MCF 10A (cell line): ENCODE measurements at regions of chr12 and their contacts with region 1.

Region 1: GRCh38 chr12:569803-570434 is 93.3 kb downstream of the NINJ2 start:
- DNase-seq: peak; percentile 86
- H3K4me3 Mint-ChIP-seq: peak overlapping the region; percentile 85
- H3K27ac Mint-ChIP-seq: peak overlapping the region; percentile 90
- H3K4me1 Mint-ChIP-seq: peaks cover 23% of the 10 kb centered on the region
- H3K27me3 Mint-ChIP-seq: no peaks in the 10 kb centered on the region
- CTCF ChIP-seq: peak; percentile 90

Region 2: GRCh38 chr12:630656-631632 is 61.0 kb after region 1 on chr12:
- CTCF ChIA-PET with region 1: interaction called, 11 read pairs
- POLR2A ChIA-PET with region 1: interaction called, 16 read pairs
- intact Hi-C with region 1: no loop called
- DNase-seq: no peak
- H3K4me3 Mint-ChIP-seq: no peak overlapping the region
- H3K27ac Mint-ChIP-seq: peak overlapping the region; percentile 89
- H3K4me1 Mint-ChIP-seq: peaks cover 15% of the 10 kb centered on the region
- H3K27me3 Mint-ChIP-seq: no peaks in the 10 kb centered on the region
- CTCF ChIP-seq: no peak

Region 3: DNA sequence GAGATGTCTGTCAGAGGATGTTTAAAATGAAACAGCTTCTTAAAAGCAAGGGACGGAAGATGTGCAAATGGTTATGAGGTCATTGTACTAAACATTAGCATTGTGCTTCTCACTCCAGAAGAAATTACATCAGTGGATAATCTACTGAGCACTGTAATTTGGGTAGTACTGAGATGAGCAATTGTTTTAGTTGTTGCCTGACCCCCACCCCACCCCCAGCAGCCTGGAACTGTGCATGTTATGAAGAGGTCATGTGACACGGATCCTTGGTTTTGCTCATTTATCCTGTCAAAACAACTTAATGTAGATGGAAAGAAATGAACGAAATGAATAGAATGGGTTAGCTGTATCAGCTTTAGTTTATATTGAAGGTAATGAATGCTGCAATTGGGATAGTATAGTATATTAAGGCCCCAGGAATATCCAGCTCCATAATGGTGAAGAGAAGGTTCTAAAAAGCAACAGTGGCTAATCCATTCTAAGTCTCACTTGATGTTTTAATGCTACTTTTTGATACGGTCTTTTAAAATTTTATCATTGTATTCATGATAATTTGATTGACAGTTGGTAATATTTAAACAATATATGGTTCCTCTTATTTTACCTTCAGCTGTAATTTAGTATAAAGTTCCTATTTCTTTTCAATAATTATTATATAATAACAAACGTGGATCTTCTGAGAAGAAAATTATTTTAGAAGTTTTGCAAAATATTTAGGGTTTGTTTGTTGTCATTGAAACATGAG is 240.9 kb after region 1 on chr12:
- CTCF ChIA-PET with region 1: interaction called, 74 read pairs
- POLR2A ChIA-PET with region 1: interaction called, 53 read pairs
- intact Hi-C with region 1: loop called (anchors 1 kb)
- DNase-seq: no peak
- H3K4me3 Mint-ChIP-seq: no peak overlapping the region
- H3K27ac Mint-ChIP-seq: no peak overlapping the region
- H3K4me1 Mint-ChIP-seq: peaks cover 27% of the 10 kb centered on the region
- H3K27me3 Mint-ChIP-seq: no peaks in the 10 kb centered on the region
- CTCF ChIP-seq: no peak

Region 4: GRCh38 chr12:851913-852312 is 282.0 kb after region 1 on chr12:
- CTCF ChIA-PET with region 1: interaction called, 5 read pairs
- POLR2A ChIA-PET with region 1: interaction called, 11 read pairs
- intact Hi-C with region 1: no loop called
- DNase-seq: peak; percentile 76
- H3K4me3 Mint-ChIP-seq: peak overlapping the region; percentile 63
- H3K27ac Mint-ChIP-seq: peak overlapping the region; percentile 80
- H3K4me1 Mint-ChIP-seq: peaks cover 44% of the 10 kb centered on the region
- H3K27me3 Mint-ChIP-seq: no peaks in the 10 kb centered on the region
- CTCF ChIP-seq: no peak

Region 5: DNA sequence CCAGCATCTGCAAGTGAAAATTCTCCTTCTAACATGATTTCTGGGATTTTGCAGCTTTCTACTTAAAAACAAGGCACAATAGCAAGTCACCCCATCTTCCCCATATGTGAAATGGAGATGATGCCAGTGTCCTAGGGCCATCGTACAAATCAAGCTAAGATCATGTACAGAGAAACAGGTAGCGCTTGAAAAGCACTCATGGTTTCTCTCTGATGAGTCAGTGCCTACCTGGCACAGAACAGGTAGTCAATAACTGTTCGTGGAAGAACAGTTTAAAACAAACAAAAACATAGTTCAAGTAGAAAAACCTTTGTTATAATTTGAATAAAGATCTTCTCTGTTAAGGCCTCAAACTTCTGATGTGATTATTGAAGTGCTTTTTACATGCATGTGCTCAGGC is 332.7 kb after region 1 on chr12:
- CTCF ChIA-PET with region 1: interaction called, 3 read pairs
- POLR2A ChIA-PET with region 1: interaction called, 6 read pairs
- intact Hi-C with region 1: loop called (anchors 1 kb)
- DNase-seq: no peak
- H3K4me3 Mint-ChIP-seq: no peak overlapping the region
- H3K27ac Mint-ChIP-seq: no peak overlapping the region
- H3K4me1 Mint-ChIP-seq: no peaks in the 10 kb centered on the region
- H3K27me3 Mint-ChIP-seq: no peaks in the 10 kb centered on the region
- CTCF ChIP-seq: no peak

Region 6: DNA sequence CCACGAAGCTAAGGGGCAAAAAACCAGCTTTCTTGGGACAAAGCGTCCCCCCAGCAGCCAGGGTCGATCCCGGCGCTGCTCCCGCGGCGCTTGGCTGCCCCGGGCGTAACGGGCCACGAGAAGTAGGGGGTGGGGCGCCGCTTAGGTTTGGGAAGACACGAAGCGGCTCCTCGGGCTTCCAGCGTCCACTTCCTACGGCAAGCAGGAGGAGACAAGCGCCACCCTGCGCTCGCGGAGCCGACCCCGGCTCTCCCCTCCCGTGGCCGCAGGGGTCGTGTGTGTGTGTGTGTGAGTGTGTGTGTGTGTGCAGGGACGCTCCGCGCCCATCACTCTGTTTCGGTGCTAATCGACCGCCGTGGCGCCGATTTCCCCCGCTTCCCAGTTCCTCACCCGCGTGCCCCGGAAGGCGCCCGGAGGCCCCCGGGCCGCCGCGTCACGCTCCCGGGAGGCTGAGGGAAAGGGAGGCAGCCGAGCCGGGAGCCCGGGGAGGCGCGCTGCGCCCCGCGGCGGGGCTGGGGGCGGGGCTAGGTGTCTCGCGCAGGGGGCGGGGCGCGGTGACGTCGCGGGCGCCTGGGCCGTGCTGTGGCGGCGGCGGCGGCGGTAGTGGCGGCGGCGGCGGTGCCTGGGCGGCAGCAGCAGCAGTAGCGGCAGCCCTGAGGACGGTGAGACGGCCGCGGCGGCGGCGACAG is 420.9 kb after region 1 on chr12 and contains the start of gene ERC1:
- CTCF ChIA-PET with region 1: no interaction called
- POLR2A ChIA-PET with region 1: interaction called, 6 read pairs
- intact Hi-C with region 1: loop called (anchors 5 kb)
- DNase-seq: peak; percentile 87
- H3K4me3 Mint-ChIP-seq: peak within 1 kb of the TSS; percentile 99
- H3K27ac Mint-ChIP-seq: peak within 1 kb of the TSS; percentile 56
- H3K4me1 Mint-ChIP-seq: peaks cover 40% of the 10 kb centered on the region
- H3K27me3 Mint-ChIP-seq: no peaks in the 10 kb centered on the region
- CTCF ChIP-seq: no peak
- total RNA-seq, gene ERC1: 55.1 and 86.8 TPM in 2 replicates

Region 7: GRCh38 chr12:1583421-1584078 is 1013.6 kb after region 1 on chr12:
- CTCF ChIA-PET with region 1: no interaction called
- POLR2A ChIA-PET with region 1: no interaction called
- intact Hi-C with region 1: loop called (anchors 2 kb)
- DNase-seq: peak; percentile 84
- H3K4me3 Mint-ChIP-seq: no peak overlapping the region
- H3K27ac Mint-ChIP-seq: no peak overlapping the region
- H3K4me1 Mint-ChIP-seq: peaks cover 16% of the 10 kb centered on the region
- H3K27me3 Mint-ChIP-seq: no peaks in the 10 kb centered on the region
- CTCF ChIP-seq: peak; percentile 82